Colonic mucosa (tissue), 4 donors: ENCODE measurements at regions of chr7 and their contacts with region 1.

Region 1: DNA sequence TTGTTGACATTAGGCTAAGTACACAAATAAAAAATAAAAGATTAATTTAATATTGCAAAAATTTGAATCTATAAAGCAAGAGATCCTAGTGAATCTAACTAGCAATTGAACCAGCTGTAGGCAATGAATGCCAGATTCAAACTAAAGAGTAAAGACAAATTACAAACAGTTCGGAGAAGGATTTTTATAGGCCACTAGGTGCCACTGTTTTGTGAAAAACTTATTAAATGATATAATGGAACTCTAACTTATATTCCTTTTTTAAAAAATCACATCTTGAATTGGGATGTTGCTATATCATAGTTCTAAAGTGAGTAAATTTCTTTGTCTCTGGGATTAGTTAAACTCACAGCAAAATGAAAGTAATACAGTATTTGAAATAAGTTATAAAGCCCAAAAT is 39.1 kb upstream of the GNAI1 start:
- DNase-seq: no peak
- H3K4me3 ChIP-seq: no peak overlapping the region
- H3K27ac ChIP-seq: no peak overlapping the region
- H3K4me1 ChIP-seq: no peaks in the 10 kb centered on the region
- H3K27me3 ChIP-seq: no peaks in the 10 kb centered on the region
- CTCF ChIP-seq: peak; percentile 43

Region 2: GRCh38 chr7:80047856-80048459 is 47.6 kb before region 1 on chr7:
- intact Hi-C with region 1: no loop called
- DNase-seq: no peak
- H3K4me3 ChIP-seq: no peak overlapping the region
- H3K27ac ChIP-seq: no peak overlapping the region
- H3K4me1 ChIP-seq: no peaks in the 10 kb centered on the region
- H3K27me3 ChIP-seq: no peaks in the 10 kb centered on the region
- CTCF ChIP-seq: peak; percentile 13

Region 3: DNA sequence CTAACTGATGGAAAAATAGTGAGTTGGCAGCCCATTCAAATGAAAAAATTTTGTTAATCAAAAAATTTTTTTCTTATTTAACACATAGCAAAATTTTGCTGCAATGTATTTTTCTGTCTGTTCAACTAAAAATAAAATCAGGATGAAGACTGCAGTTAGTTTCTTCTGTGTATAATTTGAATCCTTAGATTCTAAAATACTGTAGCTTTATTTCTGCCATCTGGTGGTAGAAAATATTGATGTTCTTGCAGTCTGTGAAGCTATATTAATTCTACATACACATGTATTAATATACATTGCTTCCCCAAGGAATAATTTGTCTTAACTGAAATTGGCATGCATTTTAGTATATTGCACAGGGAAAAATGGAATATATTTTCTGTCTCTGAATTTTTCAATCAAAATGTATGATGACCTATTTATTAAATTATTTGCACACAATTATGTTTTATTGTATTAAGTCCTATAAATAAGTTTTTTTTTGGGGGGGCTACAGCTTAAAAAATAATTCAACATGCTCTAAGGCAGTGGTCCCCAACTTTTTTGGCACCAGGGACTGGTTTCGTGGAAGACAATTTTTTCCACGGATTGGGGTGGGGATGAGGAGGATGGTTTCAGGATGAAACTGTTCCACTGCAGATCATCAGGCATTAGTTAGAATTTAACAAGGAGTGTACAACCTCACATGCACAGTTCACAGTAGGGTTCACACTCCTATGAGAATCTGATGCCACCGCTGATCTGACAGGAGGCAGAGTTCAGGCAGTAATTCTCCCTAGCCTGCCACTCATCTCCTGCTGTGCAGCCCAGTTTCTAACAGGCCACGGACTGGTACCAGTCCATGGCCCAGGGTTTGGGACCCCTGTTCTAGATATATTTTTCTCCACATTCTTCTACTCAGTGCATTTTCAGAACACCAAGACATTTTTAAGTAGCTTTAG is 297.0 kb after region 1 on chr7:
- intact Hi-C with region 1: loop called (anchors 10 kb)
- DNase-seq: no peak
- H3K4me3 ChIP-seq: no peak overlapping the region
- H3K27ac ChIP-seq: no peak overlapping the region
- H3K4me1 ChIP-seq: no peaks in the 10 kb centered on the region
- H3K27me3 ChIP-seq: no peaks in the 10 kb centered on the region
- CTCF ChIP-seq: peak; percentile 23